ENCODE measurements at regions of chr15 and their contacts with region 1.

Region 1: GRCh38 chr15:89171136-89172072 is 50.0 kb downstream of the RLBP1 start:
- DNase-seq: peak; percentile 83
- ATAC-seq: peak; percentile 95
- H3K4me3 Mint-ChIP-seq: no peak overlapping the region
- H3K27ac Mint-ChIP-seq: peak overlapping the region; percentile 32; the same call in 1 of the 2 replicates
- H3K4me1 Mint-ChIP-seq: peaks cover 7% of the 10 kb centered on the region
- H3K27me3 Mint-ChIP-seq: no peaks in the 10 kb centered on the region
- CTCF ChIP-seq: peak; percentile 76

Region 2: DNA sequence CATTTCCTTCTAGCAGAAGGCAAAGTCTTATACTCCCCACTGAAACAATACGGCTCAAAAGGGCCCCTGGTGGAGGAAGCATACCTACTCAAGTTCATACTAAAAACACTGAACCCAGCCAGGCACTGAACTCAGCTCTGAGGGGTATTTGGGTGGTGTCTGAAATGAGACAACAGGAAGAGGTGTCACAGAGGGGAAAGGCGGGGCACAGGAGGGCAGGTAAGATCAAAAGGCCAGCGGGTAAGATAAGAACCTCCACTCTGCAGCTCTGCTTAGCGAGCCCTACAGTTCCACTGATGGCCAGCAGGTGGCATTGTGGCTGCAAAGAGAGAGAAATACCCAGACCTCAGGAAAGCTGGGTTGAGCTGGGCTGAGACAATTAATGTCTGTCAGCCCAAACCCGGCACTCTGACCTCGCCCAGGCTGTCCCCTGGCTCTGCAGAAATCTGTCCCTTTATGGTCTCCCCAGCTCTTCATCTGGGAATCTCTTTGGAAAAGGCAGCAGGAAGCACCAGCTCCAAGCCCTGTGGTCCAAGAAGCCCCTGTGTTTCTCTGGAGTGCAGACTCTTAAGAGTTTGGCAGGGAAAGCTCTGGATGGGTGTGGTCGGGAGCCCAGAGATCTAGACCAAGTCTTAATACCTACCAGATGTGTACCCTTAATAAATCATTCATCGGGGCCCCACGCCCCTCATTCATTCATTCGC is 266.6 kb before region 1 on chr15:
- CTCF ChIA-PET with region 1: interaction called, 18 read pairs
- POLR2A ChIA-PET with region 1: no interaction called
- DNase-seq: peak; percentile 94
- ATAC-seq: peak; percentile 91
- H3K4me3 Mint-ChIP-seq: no peak overlapping the region
- H3K27ac Mint-ChIP-seq: peak overlapping the region; percentile 39; the same call in 1 of the 2 replicates
- H3K4me1 Mint-ChIP-seq: peaks cover 64% of the 10 kb centered on the region
- H3K27me3 Mint-ChIP-seq: no peaks in the 10 kb centered on the region; the same call in 1 of the 2 replicates
- CTCF ChIP-seq: peak; percentile 99

Region 3: DNA sequence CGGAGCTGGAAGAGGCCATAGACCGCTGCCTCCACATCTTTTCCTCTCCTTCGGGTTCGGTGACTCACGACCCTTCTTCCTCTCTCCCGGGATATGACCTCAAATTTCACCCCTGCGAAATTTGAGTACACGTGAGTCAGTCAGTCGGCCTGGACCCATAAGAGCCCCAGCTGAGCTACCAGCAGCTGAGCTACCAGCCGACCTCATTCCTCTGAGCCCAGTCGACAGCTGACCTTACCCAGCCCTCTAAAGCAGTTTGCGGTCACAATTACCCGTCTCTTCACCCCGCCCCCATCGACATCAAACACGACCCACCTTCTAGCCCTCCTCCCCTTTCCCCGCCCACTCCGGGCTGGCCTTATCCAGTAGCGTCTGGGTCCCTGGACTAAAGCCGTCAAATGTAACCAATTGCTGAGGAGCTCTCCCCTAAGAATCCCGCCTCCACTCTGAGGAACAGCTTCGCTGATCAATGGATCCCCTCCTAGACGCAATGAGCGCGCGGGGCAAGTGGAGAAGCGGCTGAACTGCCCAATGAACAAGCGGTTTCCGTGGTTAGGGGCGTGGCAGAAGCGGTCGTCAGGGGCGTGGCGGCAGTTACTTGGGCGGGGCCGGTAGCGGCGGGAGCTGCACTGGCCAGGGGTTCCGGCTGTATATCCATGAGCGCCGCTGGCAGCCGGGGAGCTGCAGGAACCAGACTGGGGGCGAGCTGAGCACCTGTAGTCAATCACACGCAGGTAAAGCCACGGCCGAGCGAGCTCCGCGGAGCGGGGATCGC is 83.4 kb before region 1 on chr15 and contains the start of gene ABHD2:
- CTCF ChIA-PET with region 1: interaction called, 27 read pairs
- POLR2A ChIA-PET with region 1: no interaction called
- DNase-seq: peak; percentile 99
- ATAC-seq: peak; percentile 99
- H3K4me3 Mint-ChIP-seq: no peak within 1 kb of the TSS
- H3K27ac Mint-ChIP-seq: no peak within 1 kb of the TSS
- H3K4me1 Mint-ChIP-seq: peaks cover 36% of the 10 kb centered on the region
- H3K27me3 Mint-ChIP-seq: no peaks in the 10 kb centered on the region
- CTCF ChIP-seq: no peak
- total RNA-seq, gene ABHD2: 26.2 to 29.7 TPM (median 29.5 TPM) in 3 replicates

Region 4: GRCh38 chr15:89112341-89112971 is 58.9 kb before region 1 on chr15:
- CTCF ChIA-PET with region 1: interaction called, 13 read pairs
- POLR2A ChIA-PET with region 1: no interaction called
- DNase-seq: no peak
- ATAC-seq: no peak
- H3K4me3 Mint-ChIP-seq: no peak overlapping the region
- H3K27ac Mint-ChIP-seq: peak overlapping the region; percentile 54
- H3K4me1 Mint-ChIP-seq: peaks cover 87% of the 10 kb centered on the region
- H3K27me3 Mint-ChIP-seq: no peaks in the 10 kb centered on the region
- CTCF ChIP-seq: no peak

Region 5: DNA sequence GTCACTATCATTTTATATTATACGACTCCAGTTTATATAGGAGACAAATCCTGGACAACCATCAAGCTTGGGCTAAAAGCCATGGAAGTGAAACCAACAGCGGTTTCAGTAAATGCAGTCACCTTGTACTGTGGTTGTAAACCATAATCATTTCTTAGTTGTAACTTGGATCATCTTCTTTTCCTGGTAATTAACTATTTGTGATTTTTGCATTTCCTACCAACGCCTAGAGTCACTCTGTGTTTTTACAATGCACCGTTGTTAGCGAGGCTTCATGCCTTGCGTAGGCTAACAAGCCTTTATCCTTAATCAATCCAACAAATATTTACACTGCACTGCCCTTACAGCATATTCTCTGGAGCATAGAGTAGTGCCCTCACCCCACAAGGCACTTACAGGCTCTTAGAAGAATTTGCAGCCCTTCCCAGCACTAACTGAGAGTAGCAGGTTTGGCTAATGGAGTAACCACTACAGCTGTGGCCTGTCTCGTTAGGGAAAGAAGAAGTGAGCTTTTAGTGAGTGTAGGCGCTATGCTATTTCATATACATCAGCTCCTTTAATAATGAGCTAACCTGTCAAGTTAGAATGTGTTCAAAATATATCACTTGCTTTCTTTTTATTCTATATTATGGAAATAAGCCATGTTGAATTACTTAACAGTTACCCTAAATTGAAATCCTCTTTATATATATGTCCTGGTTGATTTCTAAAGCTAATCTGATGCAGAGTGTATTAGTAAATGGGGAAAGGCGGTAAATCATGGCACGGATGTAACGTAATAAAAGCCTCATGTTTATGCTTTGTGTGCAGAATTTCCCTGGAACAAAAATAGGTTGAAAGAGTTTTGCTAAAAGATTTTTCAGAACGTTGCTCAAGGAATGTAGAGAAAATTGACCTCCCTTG is 20.4 kb before region 1 on chr15:
- CTCF ChIA-PET with region 1: interaction called, 14 read pairs
- POLR2A ChIA-PET with region 1: interaction called, 3 read pairs
- DNase-seq: no peak
- ATAC-seq: no peak
- H3K4me3 Mint-ChIP-seq: no peak overlapping the region
- H3K27ac Mint-ChIP-seq: peak overlapping the region; percentile 26; the same call in 1 of the 2 replicates
- H3K4me1 Mint-ChIP-seq: peaks cover 16% of the 10 kb centered on the region
- H3K27me3 Mint-ChIP-seq: no peaks in the 10 kb centered on the region
- CTCF ChIP-seq: no peak

Region 6: GRCh38 chr15:89383365-89384175 is 212.2 kb after region 1 on chr15:
- CTCF ChIA-PET with region 1: no interaction called
- POLR2A ChIA-PET with region 1: no interaction called
- DNase-seq: no peak
- ATAC-seq: peak; percentile 50
- H3K4me3 Mint-ChIP-seq: no peak overlapping the region
- H3K27ac Mint-ChIP-seq: no peak overlapping the region
- H3K4me1 Mint-ChIP-seq: peaks cover 30% of the 10 kb centered on the region
- H3K27me3 Mint-ChIP-seq: peaks cover 97% of the 10 kb centered on the region
- CTCF ChIP-seq: no peak

Region 7: GRCh38 chr15:89543389-89543788 is 372.0 kb after region 1 on chr15:
- CTCF ChIA-PET with region 1: no interaction called
- POLR2A ChIA-PET with region 1: no interaction called
- DNase-seq: no peak
- ATAC-seq: no peak
- H3K4me3 Mint-ChIP-seq: no peak overlapping the region
- H3K27ac Mint-ChIP-seq: no peak overlapping the region
- H3K4me1 Mint-ChIP-seq: no peaks in the 10 kb centered on the region
- H3K27me3 Mint-ChIP-seq: peaks cover 17% of the 10 kb centered on the region
- CTCF ChIP-seq: no peak

Measured in WTC11 (cell line).